ENCODE measurements at regions of chr18 and their contacts with region 1.

Region 1: DNA sequence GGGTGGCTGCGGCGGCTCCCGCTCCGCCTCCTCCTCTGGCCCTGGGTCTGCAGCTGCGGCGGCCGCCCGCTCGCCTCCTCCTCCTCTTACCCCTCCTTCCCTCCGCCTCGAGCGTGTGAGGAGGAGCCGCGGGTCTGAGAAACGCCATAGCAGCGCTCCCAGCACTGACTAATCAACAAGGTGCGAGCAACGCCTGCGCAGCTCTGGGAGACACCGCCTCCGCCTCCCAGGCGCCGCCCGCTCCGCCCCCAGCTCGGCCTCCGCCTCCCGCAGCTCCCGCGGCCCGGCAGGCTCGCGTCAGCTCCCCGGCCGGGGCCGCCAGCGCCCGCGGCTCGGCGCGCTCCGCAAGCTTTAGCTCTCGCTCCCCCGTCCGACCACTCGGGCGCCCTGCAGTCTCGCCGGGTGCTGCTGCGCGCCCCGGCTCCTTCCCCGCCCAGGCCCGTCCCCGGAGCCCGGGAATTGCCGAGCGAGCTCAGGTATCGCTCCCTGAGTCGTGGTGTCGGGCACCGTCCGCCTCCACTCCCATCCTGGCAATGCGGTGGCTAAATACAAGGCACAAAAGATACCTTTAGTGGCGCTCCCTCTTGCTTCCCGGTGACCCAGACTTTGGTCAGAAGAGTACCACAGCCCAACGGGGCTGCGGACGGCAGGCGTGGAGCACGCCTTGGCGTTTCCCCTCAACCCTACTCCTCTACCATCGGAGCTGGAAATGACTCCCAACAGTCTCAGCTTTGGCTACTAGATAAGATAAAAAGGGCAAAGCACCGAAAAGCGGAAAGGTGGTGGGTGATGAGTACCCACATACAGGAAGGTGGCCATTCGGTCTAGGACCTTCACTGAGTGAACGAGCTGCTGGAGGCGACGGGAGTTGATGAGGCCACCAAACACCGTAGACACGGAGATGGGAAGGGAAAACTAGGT is at the start of gene GAREM1:
- DNase-seq: peak; percentile 81 to 97
- H3K4me3 ChIP-seq: peak within 1 kb of the TSS; percentile 74 to 82
- H3K27ac ChIP-seq: peak within 1 kb of the TSS; percentile 81 to 84
- H3K4me1 ChIP-seq: peaks cover 0 to 8% of the 10 kb centered on the region in 2 donors
- H3K27me3 ChIP-seq: no peaks in the 10 kb centered on the region
- CTCF ChIP-seq: peak; percentile 56 to 92 (median 81)
- total RNA-seq, gene GAREM1: 8.9 TPM

Region 2: GRCh38 chr18:31983020-31983419 is 488.0 kb before region 1 on chr18:
- intact Hi-C with region 1: no loop called
- DNase-seq: no peak
- H3K4me3 ChIP-seq: no peak overlapping the region
- H3K27ac ChIP-seq: peak overlapping the region in 1 of 2 donors; percentile 16
- H3K4me1 ChIP-seq: no peaks in the 10 kb centered on the region
- H3K27me3 ChIP-seq: no peaks in the 10 kb centered on the region
- CTCF ChIP-seq: no peak

Region 3: DNA sequence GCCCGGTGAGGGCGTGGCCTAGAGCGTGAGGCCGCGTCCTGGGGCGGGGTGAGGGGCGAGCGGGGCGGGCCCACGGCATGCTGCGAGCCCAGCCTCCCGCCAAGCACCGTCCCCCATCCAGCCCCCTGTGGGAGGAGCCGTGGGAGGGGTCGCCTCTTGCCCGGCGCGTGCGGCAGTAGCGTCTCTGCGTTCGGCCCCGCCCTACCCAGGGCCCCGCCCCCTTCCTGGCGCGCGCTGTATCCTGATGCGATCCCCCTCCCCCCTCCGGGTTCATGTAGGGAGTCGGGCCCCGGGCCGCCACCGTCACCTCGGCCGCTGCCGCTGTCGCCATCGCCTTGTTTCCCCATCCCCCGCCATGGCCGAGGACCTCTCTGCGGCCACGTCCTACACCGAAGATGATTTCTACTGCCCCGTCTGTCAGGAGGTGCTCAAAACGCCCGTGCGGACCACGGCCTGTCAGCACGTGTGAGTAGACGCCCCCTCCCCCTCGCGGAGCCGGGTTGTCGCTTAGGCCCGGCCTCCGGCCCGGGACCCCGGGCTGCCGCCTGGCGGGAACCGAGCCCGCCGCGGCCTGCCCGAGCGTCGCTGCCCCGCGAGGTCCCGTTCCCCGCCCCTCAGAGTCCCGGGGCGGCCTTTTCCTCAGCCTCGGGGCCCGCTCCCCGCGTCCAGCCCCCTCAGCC is 378.4 kb before region 1 on chr18:
- intact Hi-C with region 1: loop called (anchors 5 kb)
- DNase-seq: peak; percentile 92 to 99
- H3K4me3 ChIP-seq: peak overlapping the region; percentile 89 to 96
- H3K27ac ChIP-seq: peak overlapping the region; percentile 99 to 100
- H3K4me1 ChIP-seq: peaks cover 0 to 12% of the 10 kb centered on the region in 2 donors
- H3K27me3 ChIP-seq: no peaks in the 10 kb centered on the region
- CTCF ChIP-seq: no peak

Region 4: GRCh38 chr18:32271672-32272208 is 199.2 kb before region 1 on chr18:
- intact Hi-C with region 1: loop called (anchors 1 kb)
- DNase-seq: no peak
- H3K4me3 ChIP-seq: no peak overlapping the region
- H3K27ac ChIP-seq: no peak overlapping the region
- H3K4me1 ChIP-seq: peaks cover 0 to 9% of the 10 kb centered on the region in 2 donors
- H3K27me3 ChIP-seq: no peaks in the 10 kb centered on the region
- CTCF ChIP-seq: peak; percentile 60 to 72 (median 61)

Region 5: DNA sequence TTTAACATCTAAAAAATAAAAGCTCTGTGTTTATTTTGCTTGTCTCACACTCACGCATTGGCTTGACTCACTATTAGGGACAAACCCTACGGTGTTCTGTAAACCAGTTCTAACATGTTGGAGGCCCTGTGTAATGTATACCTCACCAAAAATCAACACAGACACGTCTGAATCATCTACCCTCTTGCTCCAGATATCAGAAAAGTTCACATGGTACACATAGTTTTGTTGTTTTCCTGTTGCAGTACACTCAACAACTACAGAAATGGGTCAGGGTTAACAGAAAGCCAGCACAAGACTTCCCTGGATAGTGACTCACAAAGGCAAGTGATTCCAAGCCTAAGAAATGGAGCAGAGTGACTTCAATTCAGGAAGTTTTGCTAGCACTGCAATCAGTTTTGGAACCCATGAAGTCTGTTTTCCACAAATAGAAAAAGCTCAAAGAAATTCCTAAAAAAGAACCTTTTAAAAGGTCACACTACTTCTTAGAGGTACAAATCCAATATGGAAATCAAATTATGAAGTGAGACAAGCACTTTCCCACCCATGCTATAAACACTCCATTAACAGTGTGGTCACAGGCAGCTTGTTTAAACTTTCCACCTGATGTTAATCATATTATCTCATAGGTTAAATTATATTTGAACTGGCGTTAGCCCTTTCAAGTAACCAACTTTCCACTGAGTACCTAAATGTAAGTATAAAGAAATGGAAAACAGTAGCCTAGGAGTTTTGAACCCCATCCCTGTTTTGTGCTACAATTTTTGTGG is 87.7 kb before region 1 on chr18:
- intact Hi-C with region 1: loop called (anchors 2 kb)
- DNase-seq: no peak
- H3K4me3 ChIP-seq: peak overlapping the region in 1 of 2 donors; percentile 5
- H3K27ac ChIP-seq: peak overlapping the region; percentile 71 to 93
- H3K4me1 ChIP-seq: peaks cover 0 to 21% of the 10 kb centered on the region in 2 donors
- H3K27me3 ChIP-seq: no peaks in the 10 kb centered on the region
- CTCF ChIP-seq: no peak

Region 6: DNA sequence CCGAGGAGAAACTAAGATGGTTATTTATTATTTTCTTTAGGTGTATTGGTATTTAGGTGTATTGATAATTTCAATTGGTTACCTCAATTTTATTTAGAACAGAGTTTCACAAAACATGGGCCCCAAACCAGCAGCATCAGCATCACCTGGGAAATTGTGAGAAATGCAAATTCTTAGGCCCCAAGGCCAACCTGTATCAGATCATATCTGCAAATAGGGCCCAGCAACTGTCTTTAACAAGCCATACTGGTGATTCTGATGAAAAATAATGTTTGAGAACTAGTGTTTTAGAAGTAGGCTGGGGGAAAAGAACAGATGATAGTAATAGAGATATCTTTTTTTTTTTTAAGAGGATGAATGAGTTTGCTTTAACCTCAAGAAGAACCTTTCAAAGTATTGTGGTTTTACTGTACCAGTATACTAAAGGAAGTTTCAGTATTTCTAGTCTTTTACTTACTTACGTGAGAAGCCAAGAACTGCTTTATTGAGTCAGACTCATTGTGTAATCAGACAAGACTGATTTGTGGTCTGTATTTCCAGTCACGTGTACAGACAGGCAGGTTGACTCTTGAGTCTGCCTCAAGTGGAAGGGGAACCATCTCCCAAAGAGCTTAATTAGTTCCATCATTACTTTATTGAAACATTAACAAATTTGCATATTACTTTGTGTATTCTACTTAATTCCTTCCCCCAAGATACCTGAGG is 60.1 kb after region 1 on chr18:
- intact Hi-C with region 1: no loop called
- DNase-seq: no peak
- H3K4me3 ChIP-seq: no peak overlapping the region
- H3K27ac ChIP-seq: no peak overlapping the region
- H3K4me1 ChIP-seq: no peaks in the 10 kb centered on the region
- H3K27me3 ChIP-seq: no peaks in the 10 kb centered on the region
- CTCF ChIP-seq: no peak